ENCODE measurements at regions of chr5 and their contacts with region 1.

Region 1: GRCh38 chr5:159209438-159210305 is at the start of gene RNF145:
- DNase-seq: peak; percentile 86 to 97 (median 93)
- ATAC-seq: peak; percentile 75
- H3K4me3 ChIP-seq: peak within 1 kb of the TSS; percentile 87 to 92
- H3K4me3 Mint-ChIP-seq: peak within 1 kb of the TSS; percentile 95
- H3K27ac ChIP-seq: peak within 1 kb of the TSS; percentile 83 to 85
- H3K27ac Mint-ChIP-seq: peak within 1 kb of the TSS; percentile 98
- H3K4me1 ChIP-seq: peaks cover 33% of the 10 kb centered on the region
- H3K4me1 Mint-ChIP-seq: peaks cover 45% of the 10 kb centered on the region
- H3K27me3 ChIP-seq: no peaks in the 10 kb centered on the region
- H3K27me3 Mint-ChIP-seq: no peaks in the 10 kb centered on the region
- CTCF ChIP-seq: no peak
- total RNA-seq, gene RNF145: 62.0 to 72.8 TPM

Region 2: GRCh38 chr5:159100025-159100781 is 109.5 kb before region 1 on chr5:
- CTCF ChIA-PET with region 1: no interaction called
- POLR2A ChIA-PET with region 1: no interaction called
- intact Hi-C with region 1: loop called (anchors 2 to 5 kb)
- DNase-seq: peak; percentile 52 to 91 (median 77)
- ATAC-seq: peak; percentile 87
- H3K4me3 ChIP-seq: peak overlapping the region; percentile 53 to 71
- H3K4me3 Mint-ChIP-seq: peak overlapping the region; percentile 88
- H3K27ac ChIP-seq: no peak overlapping the region
- H3K27ac Mint-ChIP-seq: peak overlapping the region; percentile 60
- H3K4me1 ChIP-seq: peaks cover 26% of the 10 kb centered on the region
- H3K4me1 Mint-ChIP-seq: peaks cover 42% of the 10 kb centered on the region
- H3K27me3 ChIP-seq: peaks cover 15 to 45% of the 10 kb centered on the region in 2 experiments
- H3K27me3 Mint-ChIP-seq: peaks cover 46% of the 10 kb centered on the region
- CTCF ChIP-seq: no peak

Region 3: DNA sequence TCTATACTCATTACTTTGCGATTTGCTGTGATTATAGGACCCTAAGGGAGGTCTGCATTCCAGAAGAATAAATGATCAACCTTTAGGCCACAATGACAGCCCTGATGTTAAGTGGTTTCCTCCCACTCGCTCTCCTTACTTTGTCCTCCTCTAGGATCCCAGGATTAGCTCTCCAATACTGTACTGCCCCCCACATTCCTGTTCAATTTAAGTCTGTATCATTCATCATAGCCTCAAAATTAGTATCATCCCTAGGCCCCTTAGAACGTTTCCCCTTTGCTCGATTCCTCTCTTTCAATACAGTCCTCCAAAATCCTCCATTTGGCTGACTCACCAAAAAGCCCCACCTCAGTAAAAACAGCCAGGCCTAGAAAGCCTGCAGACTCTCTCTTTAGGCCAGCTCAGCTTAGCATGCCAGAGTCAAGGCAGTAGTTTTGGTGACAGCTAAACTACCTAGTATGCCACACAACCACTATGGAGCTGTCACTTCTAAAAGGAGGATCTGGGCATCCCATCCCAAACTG is 24.8 kb before region 1 on chr5:
- CTCF ChIA-PET with region 1: no interaction called
- POLR2A ChIA-PET with region 1: interaction called, 3 read pairs
- intact Hi-C with region 1: loop called in 1 of 2 experiments (anchors 2 kb)
- DNase-seq: peak in 1 of 9 experiments; percentile 20
- ATAC-seq: no peak
- H3K4me3 ChIP-seq: no peak overlapping the region
- H3K4me3 Mint-ChIP-seq: no peak overlapping the region
- H3K27ac ChIP-seq: no peak overlapping the region
- H3K27ac Mint-ChIP-seq: peak overlapping the region; percentile 61
- H3K4me1 ChIP-seq: peaks cover 14% of the 10 kb centered on the region
- H3K4me1 Mint-ChIP-seq: peaks cover 56% of the 10 kb centered on the region
- H3K27me3 ChIP-seq: no peaks in the 10 kb centered on the region
- H3K27me3 Mint-ChIP-seq: no peaks in the 10 kb centered on the region
- CTCF ChIP-seq: no peak

Region 4: DNA sequence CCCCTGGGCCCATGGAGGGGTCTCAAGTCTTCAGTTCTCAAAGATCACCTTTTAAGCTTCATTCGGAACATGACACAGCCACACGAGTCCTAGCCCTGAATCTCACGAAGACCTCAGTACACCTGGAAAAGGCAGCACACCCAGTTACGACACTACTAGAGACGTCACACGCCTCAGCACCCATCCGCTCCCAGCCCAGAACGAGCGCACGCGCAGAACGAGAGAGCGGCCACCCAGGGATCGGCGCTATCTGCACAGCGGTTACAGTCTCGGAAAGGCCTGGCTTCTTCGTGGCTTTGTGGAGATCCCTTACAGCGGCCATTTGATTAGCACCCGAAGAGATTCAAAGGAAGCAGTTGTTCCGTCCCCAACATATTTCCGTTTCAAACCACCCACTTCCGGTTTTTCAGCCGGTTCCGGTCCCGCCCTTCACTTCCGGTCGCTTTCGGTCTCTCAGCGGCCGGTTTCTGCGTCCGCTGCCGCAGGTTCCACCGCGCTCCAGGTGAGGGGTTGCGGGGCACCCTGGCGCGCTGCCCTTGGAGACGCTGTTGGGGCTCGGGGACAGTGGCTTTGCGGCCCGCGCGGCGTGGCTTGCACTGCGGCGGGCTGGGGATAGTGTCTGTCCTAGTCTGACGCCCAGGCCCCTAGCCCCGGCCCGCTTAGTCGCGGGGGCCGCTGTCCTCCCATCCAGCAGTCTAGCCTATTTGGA is 53.3 kb after region 1 on chr5 and contains the start of gene UBLCP1:
- CTCF ChIA-PET with region 1: interaction called, 3 read pairs
- POLR2A ChIA-PET with region 1: interaction called, 10 read pairs
- intact Hi-C with region 1: loop called (anchors 1 kb)
- DNase-seq: peak; percentile 57 to 92 (median 80)
- ATAC-seq: peak; percentile 86
- H3K4me3 ChIP-seq: peak within 1 kb of the TSS; percentile 89 to 96
- H3K4me3 Mint-ChIP-seq: peak within 1 kb of the TSS; percentile 92
- H3K27ac ChIP-seq: peak within 1 kb of the TSS; percentile 97 to 99
- H3K27ac Mint-ChIP-seq: peak within 1 kb of the TSS; percentile 99
- H3K4me1 ChIP-seq: peaks cover 21% of the 10 kb centered on the region
- H3K4me1 Mint-ChIP-seq: peaks cover 55% of the 10 kb centered on the region
- H3K27me3 ChIP-seq: no peaks in the 10 kb centered on the region
- H3K27me3 Mint-ChIP-seq: no peaks in the 10 kb centered on the region
- CTCF ChIP-seq: no peak
- total RNA-seq, gene UBLCP1: 16.4 to 19.6 TPM

Region 5: DNA sequence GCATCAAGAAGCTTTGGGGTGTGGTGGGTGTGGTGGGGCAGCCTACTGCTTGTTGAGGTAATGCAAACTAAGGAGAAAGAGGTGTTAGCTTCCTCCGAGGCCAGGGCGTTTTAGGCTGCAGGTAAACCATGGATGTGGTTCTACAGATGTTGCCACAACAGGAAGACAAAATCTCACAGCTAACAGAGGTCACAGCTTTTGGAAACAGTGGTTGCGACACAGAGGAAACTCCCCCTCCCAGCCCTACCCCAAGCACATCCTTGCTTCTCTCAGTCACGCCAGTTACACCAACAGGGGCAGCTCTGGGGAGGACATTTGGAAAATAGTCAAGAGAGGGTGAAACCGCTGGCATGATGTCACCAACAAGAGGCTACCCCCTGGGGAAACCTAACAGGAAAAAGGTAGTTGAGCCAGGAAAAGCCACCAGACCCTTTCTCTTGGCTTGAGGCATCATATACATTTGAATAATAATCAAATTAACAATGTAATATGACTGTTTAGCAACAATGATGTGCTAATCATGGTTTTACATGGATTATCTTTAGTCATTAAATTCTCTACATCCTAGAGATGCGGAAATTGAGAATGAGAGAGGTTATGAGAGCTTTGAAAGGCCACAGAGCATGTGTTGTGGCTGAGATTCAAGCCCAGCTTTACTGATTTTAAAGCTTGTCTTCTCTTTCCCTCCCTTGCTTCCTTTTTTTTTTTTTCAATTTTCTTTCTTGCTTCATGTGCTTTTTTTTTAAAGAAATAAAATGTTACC is 202.8 kb after region 1 on chr5:
- CTCF ChIA-PET with region 1: no interaction called
- POLR2A ChIA-PET with region 1: interaction called, 6 read pairs
- intact Hi-C with region 1: loop called in 1 of 2 experiments (anchors 2 kb)
- DNase-seq: peak; percentile 49 to 94 (median 65)
- ATAC-seq: peak; percentile 90
- H3K4me3 ChIP-seq: no peak overlapping the region
- H3K4me3 Mint-ChIP-seq: peak overlapping the region; percentile 9
- H3K27ac ChIP-seq: peak overlapping the region; percentile 13 to 47
- H3K27ac Mint-ChIP-seq: peak overlapping the region; percentile 68
- H3K4me1 ChIP-seq: peaks cover 26% of the 10 kb centered on the region
- H3K4me1 Mint-ChIP-seq: peaks cover 40% of the 10 kb centered on the region
- H3K27me3 ChIP-seq: no peaks in the 10 kb centered on the region
- H3K27me3 Mint-ChIP-seq: no peaks in the 10 kb centered on the region
- CTCF ChIP-seq: no peak

Region 6: GRCh38 chr5:160119142-160119904 is 909.7 kb after region 1 on chr5 and contains the start of gene PWWP2A:
- CTCF ChIA-PET with region 1: no interaction called
- POLR2A ChIA-PET with region 1: no interaction called
- intact Hi-C with region 1: loop called in 1 of 2 experiments (anchors 2 kb)
- DNase-seq: peak; percentile 94 to 100 (median 97)
- ATAC-seq: peak; percentile 92
- H3K4me3 ChIP-seq: peak within 1 kb of the TSS; percentile 69 to 90
- H3K4me3 Mint-ChIP-seq: peak within 1 kb of the TSS; percentile 90
- H3K27ac ChIP-seq: peak within 1 kb of the TSS; percentile 70 to 78
- H3K27ac Mint-ChIP-seq: peak within 1 kb of the TSS; percentile 90
- H3K4me1 ChIP-seq: peaks cover 7% of the 10 kb centered on the region
- H3K4me1 Mint-ChIP-seq: peaks cover 18% of the 10 kb centered on the region
- H3K27me3 ChIP-seq: no peaks in the 10 kb centered on the region
- H3K27me3 Mint-ChIP-seq: no peaks in the 10 kb centered on the region
- CTCF ChIP-seq: no peak
- total RNA-seq, gene PWWP2A: 18.1 to 18.4 TPM